CD8-positive, alpha-beta memory T cell (primary cell): ENCODE measurements at regions of chr7 and their contacts with region 1.

Region 1: DNA sequence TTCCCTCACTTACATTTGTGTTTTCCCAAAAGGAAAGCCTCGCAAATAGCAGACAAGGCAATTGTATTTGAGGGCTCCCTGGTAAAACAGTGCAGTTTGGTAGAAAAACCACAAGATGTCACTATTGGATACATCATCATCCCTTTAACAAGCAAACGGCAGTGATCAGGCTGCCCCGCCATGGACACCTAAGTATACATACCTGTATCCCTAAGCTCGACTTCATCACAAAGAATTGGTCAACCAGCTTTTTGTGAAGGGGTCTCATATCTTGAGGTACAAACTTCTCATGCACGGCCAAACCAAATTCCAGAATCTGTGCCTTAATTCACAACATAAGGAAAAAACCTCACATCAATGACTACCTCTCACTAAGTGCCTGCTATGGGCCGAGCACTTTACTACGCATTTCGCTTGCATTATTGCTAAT is 179.5 kb upstream of the IMMP2L start:
- DNase-seq: peak in 4 of 5 donors; percentile 14 to 60 (median 33)
- H3K4me3 ChIP-seq: no peak overlapping the region
- H3K4me3 Mint-ChIP-seq: no peak overlapping the region
- H3K27ac ChIP-seq: no peak overlapping the region
- H3K27ac Mint-ChIP-seq: no peak overlapping the region
- H3K4me1 ChIP-seq: no peaks in the 10 kb centered on the region
- H3K4me1 Mint-ChIP-seq: no peaks in the 10 kb centered on the region
- H3K27me3 ChIP-seq: no peaks in the 10 kb centered on the region
- H3K27me3 Mint-ChIP-seq: peaks cover 4 to 22% of the 10 kb centered on the region in 2 donors

Region 2: DNA sequence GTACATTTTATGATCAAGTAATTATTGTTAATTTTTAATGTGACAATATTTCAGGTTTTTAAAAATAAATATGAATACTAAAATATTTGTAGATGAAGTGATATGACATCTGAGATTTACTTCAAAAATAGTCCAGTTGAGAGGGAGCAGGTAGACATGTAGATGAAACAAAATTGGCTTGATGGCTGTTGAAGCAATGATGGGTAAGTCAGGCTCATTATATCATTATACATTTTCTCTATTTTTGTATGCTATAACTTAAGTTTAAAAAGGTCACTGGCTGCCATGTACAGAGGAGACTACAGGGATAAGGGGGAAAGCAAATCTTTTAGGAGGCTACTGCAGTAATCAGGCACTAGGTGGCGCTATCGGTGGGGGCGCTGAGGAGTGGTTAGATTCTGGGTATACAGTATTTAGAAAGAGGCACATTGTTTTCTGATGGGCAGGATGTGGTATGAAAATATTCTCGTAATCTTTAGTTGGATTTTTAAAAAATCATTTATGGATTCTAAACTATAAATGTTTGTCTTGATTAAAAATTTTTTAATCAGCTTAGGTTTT is 10.3 kb after region 1 on chr7:
- CTCF ChIA-PET with region 1: interaction called, 13 read pairs
- POLR2A ChIA-PET with region 1: no interaction called
- DNase-seq: peak in 4 of 5 donors; percentile 10 to 61 (median 20)
- H3K4me3 ChIP-seq: no peak overlapping the region
- H3K4me3 Mint-ChIP-seq: no peak overlapping the region
- H3K27ac ChIP-seq: no peak overlapping the region
- H3K27ac Mint-ChIP-seq: no peak overlapping the region
- H3K4me1 ChIP-seq: no peaks in the 10 kb centered on the region
- H3K4me1 Mint-ChIP-seq: peaks cover 0 to 2% (median 0%) of the 10 kb centered on the region in 3 donors
- H3K27me3 ChIP-seq: no peaks in the 10 kb centered on the region
- H3K27me3 Mint-ChIP-seq: peaks cover 1 to 31% of the 10 kb centered on the region in 2 donors